ENCODE measurements at regions of chr1 and their contacts with region 1.

Region 1: GRCh38 chr1:62144238-62144831 is 50.3 kb upstream of the L1TD1 start:
- DNase-seq: peak; percentile 45
- CTCF ChIP-seq: peak; percentile 78

Region 2: DNA sequence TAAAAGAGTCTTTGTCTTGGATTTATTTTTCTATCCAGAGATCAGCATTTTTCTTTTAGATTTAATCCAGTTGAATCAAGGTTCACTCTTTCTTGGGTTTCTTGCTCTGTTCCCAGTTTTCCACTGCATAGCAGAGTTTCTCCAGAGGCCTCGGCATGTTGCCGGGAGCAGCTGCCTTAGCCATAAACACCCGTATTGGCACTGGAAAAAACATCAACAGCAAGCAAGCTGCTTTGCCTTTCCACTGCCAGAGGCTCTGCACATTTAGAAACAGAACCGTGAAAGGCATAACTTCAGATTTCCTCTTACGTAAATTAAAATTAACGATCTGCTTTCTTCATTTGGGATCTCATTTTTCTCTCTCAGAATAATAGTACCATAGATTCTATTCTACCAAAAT is 131.5 kb before region 1 on chr1:
- CTCF ChIA-PET with region 1: no interaction called
- POLR2A ChIA-PET with region 1: no interaction called
- DNase-seq: no peak
- CTCF ChIP-seq: no peak

Region 3: DNA sequence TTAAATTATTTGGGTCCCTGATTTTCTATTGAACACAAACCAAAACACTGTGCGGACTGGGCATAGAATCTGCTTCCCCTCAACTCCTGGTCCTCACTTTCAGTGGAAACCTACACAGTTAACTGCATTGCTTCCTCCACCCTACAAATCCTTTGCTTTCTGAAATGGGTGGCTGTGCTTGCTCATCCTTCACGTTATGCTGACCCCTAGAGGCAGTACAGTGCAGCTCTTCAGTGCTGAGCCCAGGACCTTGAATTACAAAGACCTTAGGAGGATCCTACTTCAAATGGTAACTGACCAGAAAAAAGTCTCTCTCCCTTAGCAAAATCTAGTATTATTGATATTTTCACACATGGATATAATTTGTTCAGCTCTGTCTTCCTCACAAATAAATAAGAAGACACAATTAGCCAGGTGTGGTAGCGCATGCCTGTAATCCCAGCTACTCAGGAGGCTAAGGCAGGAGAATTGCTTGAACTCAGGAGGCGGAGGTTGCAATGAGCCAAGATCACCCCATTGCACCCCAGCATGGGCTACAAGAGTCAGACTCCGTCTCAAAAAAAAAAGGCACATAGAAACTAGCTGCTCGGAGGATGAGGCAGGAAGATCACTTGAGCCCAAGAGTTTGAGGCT is 13.1 kb before region 1 on chr1:
- CTCF ChIA-PET with region 1: interaction called, 37 read pairs
- POLR2A ChIA-PET with region 1: no interaction called
- DNase-seq: peak; percentile 75
- CTCF ChIP-seq: peak; percentile 97

Region 4: DNA sequence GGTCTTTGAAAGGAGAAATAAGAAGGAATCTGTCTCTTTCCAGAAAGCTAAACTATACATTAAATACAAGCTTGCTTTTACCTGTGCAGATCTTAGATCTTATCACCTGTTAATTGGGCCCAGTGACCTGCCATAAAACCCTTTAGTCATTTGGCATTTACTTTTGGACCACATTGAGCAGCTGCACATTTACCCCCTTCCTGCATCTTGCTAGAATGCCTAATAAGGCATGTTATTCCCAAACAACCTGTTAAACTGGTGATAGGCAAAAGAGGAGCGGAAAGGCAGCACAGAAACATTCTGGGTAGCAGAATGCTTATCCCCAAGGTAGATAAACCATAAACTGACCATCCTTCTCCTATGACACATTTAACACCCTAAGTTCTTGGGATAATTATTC is 10.4 kb after region 1 on chr1:
- CTCF ChIA-PET with region 1: interaction called, 20 read pairs
- POLR2A ChIA-PET with region 1: no interaction called
- DNase-seq: no peak
- CTCF ChIP-seq: no peak

Region 5: GRCh38 chr1:62159940-62160348 is 15.6 kb after region 1 on chr1:
- CTCF ChIA-PET with region 1: interaction called, 20 read pairs
- POLR2A ChIA-PET with region 1: no interaction called
- DNase-seq: no peak
- CTCF ChIP-seq: no peak

Region 6: DNA sequence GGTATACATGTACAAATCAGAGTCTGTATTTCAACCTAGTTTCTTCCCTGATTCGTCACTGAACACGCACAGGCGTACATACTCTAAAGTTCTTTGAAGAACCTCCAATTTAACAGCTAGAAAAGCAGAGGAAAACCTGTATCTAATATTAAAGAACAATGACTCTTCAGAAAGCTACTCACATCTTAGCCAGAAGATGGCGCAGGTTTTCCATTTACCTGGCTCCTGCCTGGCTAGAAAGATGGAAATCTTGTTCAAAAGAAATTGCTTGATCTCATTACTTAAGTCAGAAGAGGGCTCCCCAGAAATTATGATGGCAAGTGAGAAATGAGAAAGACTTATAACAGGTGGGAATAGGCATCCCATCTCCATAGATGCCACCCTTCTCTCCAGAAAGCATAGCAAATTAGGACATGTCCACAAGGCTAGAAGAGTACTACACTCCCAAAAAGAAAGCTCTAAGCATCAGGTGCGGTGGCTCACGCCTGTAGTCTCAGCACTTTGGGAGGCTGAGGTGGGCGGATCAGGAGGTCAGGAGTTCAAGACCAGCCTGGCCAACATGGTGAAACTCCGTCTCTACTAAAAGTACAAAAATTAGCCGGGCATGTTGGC is 31.3 kb after region 1 on chr1:
- CTCF ChIA-PET with region 1: interaction called, 13 read pairs
- POLR2A ChIA-PET with region 1: no interaction called
- DNase-seq: peak; percentile 55
- CTCF ChIP-seq: peak; percentile 80

Region 7: GRCh38 chr1:62230709-62231108 is 86.4 kb after region 1 on chr1:
- CTCF ChIA-PET with region 1: no interaction called
- POLR2A ChIA-PET with region 1: no interaction called
- DNase-seq: no peak
- CTCF ChIP-seq: no peak